ENCODE measurements at regions of chr11 and their contacts with region 1.

Region 1: GRCh38 chr11:84384731-84385130 is 1098.6 kb upstream of the CCDC90B start:
- DNase-seq: peak in 5 of 9 experiments; percentile 0 to 16 (median 10)
- ATAC-seq: no peak
- H3K4me3 ChIP-seq: no peak overlapping the region
- H3K4me3 Mint-ChIP-seq: no peak overlapping the region
- H3K27ac ChIP-seq: no peak overlapping the region
- H3K27ac Mint-ChIP-seq: no peak overlapping the region
- H3K4me1 ChIP-seq: no peaks in the 10 kb centered on the region
- H3K4me1 Mint-ChIP-seq: no peaks in the 10 kb centered on the region
- H3K27me3 ChIP-seq: no peaks in the 10 kb centered on the region
- H3K27me3 Mint-ChIP-seq: no peaks in the 10 kb centered on the region
- CTCF ChIP-seq: peak; percentile 50

Region 2: GRCh38 chr11:84800755-84801346 is 416.1 kb after region 1 on chr11:
- CTCF ChIA-PET with region 1: no interaction called
- POLR2A ChIA-PET with region 1: no interaction called
- intact Hi-C with region 1: no loop called
- DNase-seq: no peak
- ATAC-seq: no peak
- H3K4me3 ChIP-seq: no peak overlapping the region
- H3K4me3 Mint-ChIP-seq: no peak overlapping the region
- H3K27ac ChIP-seq: no peak overlapping the region
- H3K27ac Mint-ChIP-seq: no peak overlapping the region
- H3K4me1 ChIP-seq: no peaks in the 10 kb centered on the region
- H3K4me1 Mint-ChIP-seq: no peaks in the 10 kb centered on the region
- H3K27me3 ChIP-seq: no peaks in the 10 kb centered on the region
- H3K27me3 Mint-ChIP-seq: no peaks in the 10 kb centered on the region
- CTCF ChIP-seq: no peak

Region 3: DNA sequence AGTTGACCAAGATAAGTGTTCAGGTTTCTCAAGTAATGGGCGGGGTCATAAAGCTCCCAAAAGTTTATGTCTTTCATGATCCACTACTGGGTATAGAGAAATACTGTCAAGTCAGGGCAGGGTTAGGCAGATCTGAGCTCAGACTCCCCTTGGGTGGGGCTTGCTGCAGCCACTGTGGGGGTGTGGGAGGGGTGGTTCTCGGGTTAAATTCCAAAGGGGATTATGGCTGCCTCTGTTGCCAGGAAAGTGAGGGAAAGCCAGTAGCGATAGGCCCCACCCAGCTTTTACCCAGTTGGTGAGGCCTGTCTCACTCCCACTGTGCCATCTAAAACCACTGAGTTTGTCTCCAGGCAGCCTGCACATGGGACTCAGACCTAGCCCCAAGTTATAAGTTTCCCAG is 1204.6 kb after region 1 on chr11:
- CTCF ChIA-PET with region 1: no interaction called
- POLR2A ChIA-PET with region 1: no interaction called
- intact Hi-C with region 1: loop called in 1 of 2 experiments (anchors 10 kb)
- DNase-seq: no peak
- ATAC-seq: no peak
- H3K4me3 ChIP-seq: no peak overlapping the region
- H3K4me3 Mint-ChIP-seq: no peak overlapping the region
- H3K27ac ChIP-seq: no peak overlapping the region
- H3K27ac Mint-ChIP-seq: no peak overlapping the region
- H3K4me1 ChIP-seq: no peaks in the 10 kb centered on the region
- H3K4me1 Mint-ChIP-seq: no peaks in the 10 kb centered on the region
- H3K27me3 ChIP-seq: no peaks in the 10 kb centered on the region
- H3K27me3 Mint-ChIP-seq: peaks cover 14% of the 10 kb centered on the region
- CTCF ChIP-seq: no peak

Region 4: DNA sequence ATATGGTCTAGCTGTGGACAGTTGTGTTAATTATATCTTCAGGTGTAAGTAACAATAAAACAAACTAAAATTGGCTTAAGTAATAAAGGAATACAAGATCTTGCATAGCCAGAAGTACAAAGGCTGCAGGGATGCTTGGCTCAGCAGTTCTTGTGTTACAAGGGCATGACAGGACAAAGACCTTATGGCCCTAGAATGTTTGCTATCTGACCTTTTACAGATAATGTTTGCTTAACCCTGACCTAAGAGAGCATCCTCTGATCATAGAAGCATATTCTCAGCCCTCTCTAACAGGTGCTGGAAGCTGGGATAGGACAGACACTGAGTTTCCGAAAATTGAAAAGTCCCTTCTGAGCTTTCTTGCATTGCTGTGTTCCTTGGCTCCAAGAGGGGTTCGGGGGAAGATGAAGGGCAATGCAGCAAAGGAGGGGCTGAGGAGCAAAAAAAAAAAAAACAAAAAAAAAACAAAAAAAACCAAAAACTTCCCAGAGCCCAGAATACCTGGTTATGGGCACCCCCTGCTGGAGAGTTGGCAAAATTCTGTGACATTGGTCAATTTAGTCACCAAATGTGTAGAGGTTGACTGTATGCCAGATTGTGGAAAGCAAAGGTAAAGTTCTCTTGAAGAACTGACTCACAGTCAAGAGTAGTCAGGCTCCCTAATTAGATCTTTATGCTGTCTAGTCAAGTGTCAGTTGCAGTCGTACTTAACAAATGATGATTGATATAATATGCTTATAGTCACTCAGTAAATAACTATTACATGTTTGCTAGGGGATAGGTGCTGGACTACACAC is 1906.9 kb after region 1 on chr11:
- CTCF ChIA-PET with region 1: no interaction called
- POLR2A ChIA-PET with region 1: no interaction called
- intact Hi-C with region 1: loop called in 1 of 2 experiments (anchors 10 kb)
- DNase-seq: peak; percentile 21 to 74 (median 60)
- ATAC-seq: peak; percentile 67
- H3K4me3 ChIP-seq: no peak overlapping the region
- H3K4me3 Mint-ChIP-seq: no peak overlapping the region
- H3K27ac ChIP-seq: no peak overlapping the region
- H3K27ac Mint-ChIP-seq: no peak overlapping the region
- H3K4me1 ChIP-seq: no peaks in the 10 kb centered on the region
- H3K4me1 Mint-ChIP-seq: peaks cover 13% of the 10 kb centered on the region
- H3K27me3 ChIP-seq: no peaks in the 10 kb centered on the region
- H3K27me3 Mint-ChIP-seq: no peaks in the 10 kb centered on the region
- CTCF ChIP-seq: peak; percentile 73

Measured in CD8-positive, alpha-beta T cell (primary cell).